Panc1 (cell line): ENCODE measurements at regions of chr9 and their contacts with region 1.

Region 1: DNA sequence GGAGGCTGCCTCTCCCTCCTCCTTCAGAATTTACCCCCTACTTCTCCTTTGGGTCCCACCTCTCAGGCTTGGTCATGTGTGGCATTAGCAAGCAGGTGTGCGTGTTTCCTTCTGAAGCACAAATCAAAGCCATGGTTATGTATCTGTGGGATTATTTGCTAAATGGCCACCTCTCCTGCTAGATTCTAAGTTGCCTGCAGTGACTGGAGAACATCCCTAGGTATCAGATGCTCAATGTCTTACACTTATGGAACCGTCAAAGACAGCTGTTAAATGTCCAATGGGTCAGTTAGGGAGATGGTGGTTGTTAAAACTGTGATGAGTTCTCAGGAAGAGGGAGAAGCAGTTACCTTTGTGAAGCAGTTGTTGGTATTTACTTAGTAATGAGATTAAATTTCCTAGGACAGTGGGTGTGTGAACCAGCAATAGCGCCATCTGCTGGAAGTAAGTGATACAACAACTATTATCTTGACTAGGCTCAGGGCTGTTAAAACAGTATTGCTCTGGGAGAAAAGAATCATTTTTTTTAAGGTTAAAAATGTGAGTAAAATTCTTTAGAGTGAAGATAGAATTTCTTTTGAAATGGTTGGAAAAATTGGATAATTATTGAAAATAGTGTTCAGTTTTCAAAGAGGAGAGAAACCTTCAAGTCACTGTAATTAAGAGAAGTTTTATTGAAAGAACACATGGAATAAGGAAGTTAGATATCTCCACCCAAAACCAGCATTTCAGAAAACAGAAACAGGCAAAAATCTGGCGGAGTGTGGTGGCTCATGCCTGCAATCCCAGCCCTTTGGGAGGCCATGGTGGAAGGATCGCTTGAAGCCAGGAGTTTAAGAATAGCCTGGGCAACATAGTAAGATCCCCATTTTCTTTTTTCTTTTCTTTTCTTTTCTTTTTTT is 71.3 kb downstream of the TMC1 start:
- DNase-seq: peak; percentile 59
- ATAC-seq: peak; percentile 90
- H3K4me3 ChIP-seq: no peak overlapping the region
- H3K27ac ChIP-seq: peak overlapping the region; percentile 85
- H3K4me1 ChIP-seq: peaks cover 22% of the 10 kb centered on the region
- H3K27me3 ChIP-seq: no peaks in the 10 kb centered on the region
- CTCF ChIP-seq: peak; percentile 73

Region 2: DNA sequence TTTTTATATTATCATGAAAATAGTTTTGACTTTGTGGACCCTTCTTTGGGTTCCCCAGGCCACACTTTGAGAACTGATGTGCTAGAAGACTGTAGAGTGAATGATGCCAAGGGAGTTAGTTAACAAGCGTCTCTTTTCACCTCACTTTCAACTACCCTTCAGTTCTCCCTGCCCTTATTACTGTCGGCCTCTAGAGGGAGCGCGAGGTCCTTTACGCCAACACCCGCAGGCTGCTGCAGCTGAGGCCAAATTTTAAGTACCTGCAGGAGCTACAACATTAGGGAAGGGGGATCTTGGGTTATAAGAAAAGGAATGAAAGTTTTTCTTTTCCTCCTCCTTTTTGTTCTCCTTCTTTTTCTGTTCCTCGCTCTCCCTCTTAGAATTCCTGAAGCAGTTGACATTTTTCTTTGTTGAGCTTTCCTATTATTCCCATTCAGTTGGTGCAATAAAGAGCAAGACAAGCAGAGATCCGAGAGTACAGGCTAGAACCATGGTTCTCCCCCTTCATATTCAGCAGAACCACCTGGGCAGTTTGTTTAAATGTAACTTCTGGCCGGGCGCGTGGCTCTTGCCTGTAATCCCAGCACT is 311.7 kb before region 1 on chr9:
- CTCF ChIA-PET with region 1: no interaction called
- POLR2A ChIA-PET with region 1: no interaction called
- in situ Hi-C with region 1: no loop called
- intact Hi-C with region 1: loop called (anchors 5 kb)
- DNase-seq: peak; percentile 42
- ATAC-seq: peak; percentile 91
- H3K4me3 ChIP-seq: no peak overlapping the region
- H3K27ac ChIP-seq: no peak overlapping the region
- H3K4me1 ChIP-seq: no peaks in the 10 kb centered on the region
- H3K27me3 ChIP-seq: no peaks in the 10 kb centered on the region
- CTCF ChIP-seq: peak; percentile 91

Region 3: GRCh38 chr9:72364679-72365524 is 227.9 kb before region 1 on chr9 and contains the start of gene ZFAND5:
- CTCF ChIA-PET with region 1: interaction called, 3 read pairs
- POLR2A ChIA-PET with region 1: interaction called, 8 read pairs
- in situ Hi-C with region 1: no loop called
- intact Hi-C with region 1: loop called (anchors 5 kb)
- DNase-seq: peak; percentile 53
- ATAC-seq: peak; percentile 94
- H3K4me3 ChIP-seq: peak within 1 kb of the TSS; percentile 85 to 88
- H3K27ac ChIP-seq: peak within 1 kb of the TSS; percentile 96
- H3K4me1 ChIP-seq: peaks cover 2% of the 10 kb centered on the region
- H3K27me3 ChIP-seq: no peaks in the 10 kb centered on the region
- CTCF ChIP-seq: peak; percentile 27; the same call in 1 of the 2 replicates
- total RNA-seq, gene ZFAND5: 185 TPM

Region 4: GRCh38 chr9:72526901-72527800 is 65.6 kb before region 1 on chr9:
- CTCF ChIA-PET with region 1: no interaction called
- POLR2A ChIA-PET with region 1: no interaction called
- in situ Hi-C with region 1: no loop called
- intact Hi-C with region 1: loop called (anchors 5 kb)
- DNase-seq: no peak
- ATAC-seq: peak; percentile 90
- H3K4me3 ChIP-seq: peak overlapping the region; percentile 18 to 43
- H3K27ac ChIP-seq: peak overlapping the region; percentile 94
- H3K4me1 ChIP-seq: peaks cover 47% of the 10 kb centered on the region
- H3K27me3 ChIP-seq: no peaks in the 10 kb centered on the region
- CTCF ChIP-seq: no peak

Region 5: GRCh38 chr9:72557549-72557948 is 35.2 kb before region 1 on chr9:
- CTCF ChIA-PET with region 1: no interaction called
- POLR2A ChIA-PET with region 1: interaction called, 10 read pairs
- in situ Hi-C with region 1: no loop called
- intact Hi-C with region 1: no loop called
- DNase-seq: peak; percentile 85
- ATAC-seq: peak; percentile 98
- H3K4me3 ChIP-seq: no peak overlapping the region
- H3K27ac ChIP-seq: peak overlapping the region; percentile 94
- H3K4me1 ChIP-seq: peaks cover 32% of the 10 kb centered on the region
- H3K27me3 ChIP-seq: no peaks in the 10 kb centered on the region
- CTCF ChIP-seq: no peak

Region 6: DNA sequence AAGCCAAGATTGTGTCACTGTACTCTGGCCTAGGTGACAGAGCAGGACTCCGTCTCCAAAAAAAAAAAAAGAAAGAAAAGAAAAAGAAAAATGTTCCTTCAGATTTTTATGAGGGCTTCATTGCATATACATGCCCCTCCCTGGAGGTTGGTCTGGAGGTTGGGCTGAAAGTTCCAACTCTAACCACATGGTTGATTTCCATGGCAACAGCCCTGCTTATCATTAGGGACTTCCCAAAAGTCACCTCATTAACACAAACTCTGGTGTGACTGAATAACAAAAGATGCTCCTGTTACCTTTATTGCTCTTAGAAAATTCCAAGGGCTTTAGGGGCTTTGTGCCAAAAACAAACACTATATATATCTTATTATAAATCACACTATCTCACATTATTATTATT is 42.4 kb after region 1 on chr9:
- CTCF ChIA-PET with region 1: no interaction called
- POLR2A ChIA-PET with region 1: no interaction called
- in situ Hi-C with region 1: no loop called
- intact Hi-C with region 1: no loop called
- DNase-seq: no peak
- ATAC-seq: no peak
- H3K4me3 ChIP-seq: no peak overlapping the region
- H3K27ac ChIP-seq: no peak overlapping the region
- H3K4me1 ChIP-seq: no peaks in the 10 kb centered on the region
- H3K27me3 ChIP-seq: no peaks in the 10 kb centered on the region
- CTCF ChIP-seq: no peak

Region 7: GRCh38 chr9:73437758-73438157 is 845.0 kb after region 1 on chr9:
- CTCF ChIA-PET with region 1: no interaction called
- POLR2A ChIA-PET with region 1: no interaction called
- in situ Hi-C with region 1: no loop called
- intact Hi-C with region 1: no loop called
- DNase-seq: no peak
- ATAC-seq: no peak
- H3K4me3 ChIP-seq: no peak overlapping the region
- H3K27ac ChIP-seq: no peak overlapping the region
- H3K4me1 ChIP-seq: no peaks in the 10 kb centered on the region
- H3K27me3 ChIP-seq: no peaks in the 10 kb centered on the region
- CTCF ChIP-seq: no peak